Panc1 (cell line): ENCODE measurements at regions of chr11 and their contacts with region 1.

Region 1: GRCh38 chr11:106585061-106585460 is 433.2 kb downstream of the GUCY1A2 start:
- DNase-seq: no peak
- ATAC-seq: no peak
- H3K4me3 ChIP-seq: no peak overlapping the region
- H3K27ac ChIP-seq: no peak overlapping the region
- H3K4me1 ChIP-seq: no peaks in the 10 kb centered on the region
- H3K27me3 ChIP-seq: no peaks in the 10 kb centered on the region
- CTCF ChIP-seq: peak; percentile 18

Region 2: DNA sequence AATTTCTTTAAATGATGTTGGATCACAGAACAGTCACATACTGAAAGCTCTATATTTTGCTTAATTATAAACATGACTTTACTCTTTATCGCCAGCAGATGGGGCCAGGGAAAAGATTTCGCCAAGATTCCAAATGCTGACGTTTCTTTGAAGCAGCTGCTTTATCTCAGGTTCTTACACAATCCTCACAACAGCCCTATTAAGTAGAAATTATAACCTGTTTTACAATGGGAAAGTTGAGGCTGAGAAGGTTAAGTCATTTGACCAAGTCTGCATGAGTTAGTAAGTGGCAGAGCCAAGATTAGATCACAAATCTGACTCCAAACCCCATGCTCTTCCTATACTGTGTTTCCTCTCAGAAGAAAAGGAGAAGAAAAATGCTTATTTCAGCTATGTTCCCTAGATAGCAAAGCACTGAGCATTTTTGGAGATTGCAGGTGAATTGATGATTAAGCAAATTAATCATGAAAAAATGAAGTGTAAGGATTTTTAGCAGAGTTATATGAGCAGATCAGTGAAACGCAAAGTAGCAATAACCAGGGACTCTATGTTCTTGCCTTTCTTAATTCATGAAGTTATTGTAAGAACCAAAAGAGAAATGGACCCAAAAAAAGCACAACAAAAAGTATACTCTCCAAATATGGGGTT is 428.6 kb before region 1 on chr11:
- CTCF ChIA-PET with region 1: no interaction called
- POLR2A ChIA-PET with region 1: no interaction called
- in situ Hi-C with region 1: no loop called
- intact Hi-C with region 1: loop called (anchors 10 kb)
- DNase-seq: peak; percentile 28
- ATAC-seq: peak; percentile 82
- H3K4me3 ChIP-seq: no peak overlapping the region
- H3K27ac ChIP-seq: peak overlapping the region; percentile 0; the same call in 1 of the 2 replicates
- H3K4me1 ChIP-seq: no peaks in the 10 kb centered on the region
- H3K27me3 ChIP-seq: no peaks in the 10 kb centered on the region
- CTCF ChIP-seq: peak; percentile 77

Region 3: DNA sequence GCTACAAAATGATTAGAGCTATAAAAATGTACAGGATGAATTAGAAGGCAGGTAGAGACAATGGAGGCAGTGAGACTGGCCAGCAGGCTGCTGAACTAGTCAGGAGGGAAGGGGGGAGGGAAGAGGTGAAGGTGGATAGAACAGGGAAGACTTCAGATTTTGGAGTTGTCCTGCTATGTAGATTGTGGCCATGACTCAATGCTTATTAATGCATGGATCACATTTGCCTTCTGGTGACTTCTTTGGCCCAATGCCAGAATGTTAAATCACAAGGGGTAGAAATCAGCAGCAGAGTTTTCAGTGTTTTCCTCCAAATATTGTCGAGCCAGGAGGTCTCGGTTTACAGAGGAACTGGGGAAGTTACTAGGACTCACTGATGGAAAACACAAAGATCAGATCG is 160.9 kb before region 1 on chr11:
- CTCF ChIA-PET with region 1: no interaction called
- POLR2A ChIA-PET with region 1: no interaction called
- in situ Hi-C with region 1: no loop called
- intact Hi-C with region 1: no loop called
- DNase-seq: no peak
- ATAC-seq: no peak
- H3K4me3 ChIP-seq: no peak overlapping the region
- H3K27ac ChIP-seq: no peak overlapping the region
- H3K4me1 ChIP-seq: no peaks in the 10 kb centered on the region
- H3K27me3 ChIP-seq: no peaks in the 10 kb centered on the region
- CTCF ChIP-seq: no peak

Region 4: DNA sequence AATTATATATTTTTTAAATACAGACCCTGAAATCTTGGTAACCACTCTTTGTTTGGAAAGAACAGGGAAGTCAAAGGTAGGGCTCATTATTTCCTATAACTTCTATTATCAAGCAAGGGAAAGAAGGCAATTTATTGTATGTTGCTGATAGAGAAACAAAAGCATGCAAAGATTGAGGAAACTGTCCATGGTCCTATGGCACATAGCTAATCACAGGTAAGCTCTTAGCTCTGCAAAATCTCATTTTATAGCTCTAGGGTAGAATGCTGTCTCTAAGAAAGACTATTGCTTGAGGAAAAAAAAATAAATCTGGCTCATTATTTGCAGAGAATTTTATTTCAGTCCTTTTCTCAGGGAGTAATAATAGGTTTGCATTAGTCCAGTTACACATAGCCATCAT is 440.6 kb after region 1 on chr11:
- CTCF ChIA-PET with region 1: no interaction called
- POLR2A ChIA-PET with region 1: no interaction called
- in situ Hi-C with region 1: no loop called
- intact Hi-C with region 1: no loop called
- DNase-seq: no peak
- ATAC-seq: no peak
- H3K4me3 ChIP-seq: no peak overlapping the region
- H3K27ac ChIP-seq: no peak overlapping the region
- H3K4me1 ChIP-seq: no peaks in the 10 kb centered on the region
- H3K27me3 ChIP-seq: peaks cover 9% of the 10 kb centered on the region; the same call in 1 of the 2 replicates
- CTCF ChIP-seq: no peak